Pancreas (tissue), 10 donors: ENCODE measurements at regions of chr3 and their contacts with region 1.

Region 1: GRCh38 chr3:47849699-47850563 is 47.0 kb downstream of the DHX30 start:
- DNase-seq: no peak
- ATAC-seq: peak; percentile 15 to 50 (median 46)
- H3K4me3 ChIP-seq: no peak overlapping the region
- H3K27ac ChIP-seq: no peak overlapping the region
- H3K4me1 ChIP-seq: no peaks in the 10 kb centered on the region
- H3K27me3 ChIP-seq: no peaks in the 10 kb centered on the region
- CTCF ChIP-seq: peak in 1 of 4 donors; percentile 17

Region 2: GRCh38 chr3:47741925-47742324 is 108.0 kb before region 1 on chr3:
- intact Hi-C with region 1: no loop called
- DNase-seq: no peak
- ATAC-seq: no peak
- H3K4me3 ChIP-seq: no peak overlapping the region
- H3K27ac ChIP-seq: no peak overlapping the region
- H3K4me1 ChIP-seq: no peaks in the 10 kb centered on the region
- H3K27me3 ChIP-seq: no peaks in the 10 kb centered on the region
- CTCF ChIP-seq: no peak

Region 3: DNA sequence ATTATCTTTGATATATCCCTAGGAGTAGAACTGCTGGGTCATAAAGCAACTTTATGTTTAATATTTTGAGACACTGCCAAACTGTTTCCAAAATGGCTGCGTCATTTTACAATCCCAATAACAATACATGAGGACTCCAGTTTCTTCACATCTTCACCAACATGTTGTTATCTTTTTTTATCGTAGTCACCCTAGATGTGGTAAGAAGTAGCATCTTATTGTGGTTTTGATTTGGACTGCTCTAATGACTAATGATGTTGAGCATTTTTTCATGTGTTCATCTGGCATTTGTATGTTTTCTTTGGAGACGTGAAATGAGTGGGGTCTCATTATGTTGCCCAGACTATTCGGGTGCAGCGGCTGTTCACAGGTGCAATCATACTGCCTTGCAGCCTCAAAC is 82.5 kb after region 1 on chr3:
- intact Hi-C with region 1: no loop called
- DNase-seq: no peak
- ATAC-seq: no peak
- H3K4me3 ChIP-seq: no peak overlapping the region
- H3K27ac ChIP-seq: no peak overlapping the region
- H3K4me1 ChIP-seq: no peaks in the 10 kb centered on the region
- H3K27me3 ChIP-seq: no peaks in the 10 kb centered on the region
- CTCF ChIP-seq: no peak

Region 4: DNA sequence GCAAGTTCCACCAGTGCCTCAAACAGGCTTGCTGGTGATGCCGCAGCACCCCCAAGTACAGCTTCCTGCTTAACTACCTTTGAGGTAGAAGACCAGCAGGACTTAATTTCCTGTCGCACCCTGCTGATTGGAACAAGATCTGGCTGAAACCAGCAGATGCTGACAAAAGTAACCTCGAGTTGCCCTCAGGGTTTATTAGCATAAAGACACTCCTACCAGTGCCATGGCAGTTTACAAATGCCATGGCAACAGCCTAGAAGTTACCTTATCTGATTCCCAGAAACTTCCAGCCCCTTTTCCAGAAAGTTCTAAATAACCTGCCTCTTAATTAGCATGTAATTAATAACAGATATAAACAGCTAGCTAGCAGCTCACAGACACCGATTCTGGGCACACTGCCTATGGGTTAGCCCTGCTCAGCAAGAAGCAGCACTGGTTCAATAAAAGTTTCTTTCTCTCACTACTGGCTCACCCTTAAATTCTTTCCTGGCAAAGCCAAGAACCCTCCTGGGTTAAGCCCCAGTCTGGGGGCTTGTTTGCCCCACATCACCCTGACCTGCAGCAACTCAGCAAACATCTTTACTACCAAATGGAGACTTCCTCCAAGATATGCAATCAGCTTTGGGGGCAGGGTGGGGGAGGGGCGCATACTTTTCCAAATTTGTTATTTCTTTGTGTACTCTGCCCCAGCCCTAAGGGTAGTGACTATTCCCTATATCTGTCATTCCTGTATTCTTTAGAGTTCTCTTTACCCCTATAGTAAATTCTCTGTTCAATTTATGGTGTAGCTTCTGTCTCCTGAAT is 112.1 kb after region 1 on chr3:
- intact Hi-C with region 1: no loop called
- DNase-seq: peak in 2 of 6 donors; percentile 22 to 25
- ATAC-seq: peak; percentile 56 to 91 (median 88)
- H3K4me3 ChIP-seq: no peak overlapping the region
- H3K27ac ChIP-seq: peak overlapping the region in 3 of 4 donors; percentile 17 to 59 (median 44)
- H3K4me1 ChIP-seq: peaks cover 0 to 9% (median 0%) of the 10 kb centered on the region in 3 donors
- H3K27me3 ChIP-seq: no peaks in the 10 kb centered on the region
- CTCF ChIP-seq: no peak

Region 5: DNA sequence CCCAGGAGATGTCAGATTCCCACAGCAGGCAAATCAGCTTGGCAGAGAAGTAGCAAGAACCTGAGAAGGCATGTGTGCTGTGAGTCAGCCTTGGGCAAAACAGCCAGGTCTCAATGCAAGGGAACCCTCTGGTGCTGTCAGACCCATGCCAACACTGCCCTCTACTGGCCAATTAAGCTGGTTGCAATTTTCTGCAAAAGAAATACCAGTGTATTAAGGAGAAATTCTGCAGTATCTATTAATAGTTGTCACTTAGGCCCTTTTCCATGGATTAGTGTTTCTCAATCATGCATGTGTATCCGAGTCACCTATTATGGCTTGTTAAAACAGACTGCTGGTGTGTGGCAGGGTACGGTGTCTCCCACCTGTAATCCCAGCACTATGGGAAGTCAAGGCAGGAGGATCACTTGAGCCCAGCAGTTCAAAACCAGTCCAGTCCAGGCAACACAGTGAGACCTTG is 140.1 kb after region 1 on chr3:
- intact Hi-C with region 1: loop called in 2 of 3 experiments (anchors 10 kb)
- DNase-seq: peak in 5 of 6 donors; percentile 76 to 87 (median 80)
- ATAC-seq: peak; percentile 98 to 100 (median 99)
- H3K4me3 ChIP-seq: no peak overlapping the region
- H3K27ac ChIP-seq: no peak overlapping the region
- H3K4me1 ChIP-seq: peaks cover 0 to 4% (median 3%) of the 10 kb centered on the region in 3 donors
- H3K27me3 ChIP-seq: no peaks in the 10 kb centered on the region
- CTCF ChIP-seq: peak; percentile 79 to 90 (median 86)